ENCODE measurements at regions of chr7 and their contacts with region 1.

Region 1: GRCh38 chr7:128343554-128344430 is at the start of gene RBM28:
- DNase-seq: peak; percentile 88
- H3K4me3 Mint-ChIP-seq: peak within 1 kb of the TSS; percentile 93
- H3K27ac Mint-ChIP-seq: peak within 1 kb of the TSS; percentile 88
- H3K4me1 Mint-ChIP-seq: peaks cover 31% of the 10 kb centered on the region
- H3K27me3 Mint-ChIP-seq: peaks cover 15% of the 10 kb centered on the region
- total RNA-seq, gene RBM28: 30.7 to 34.8 TPM

Region 2: DNA sequence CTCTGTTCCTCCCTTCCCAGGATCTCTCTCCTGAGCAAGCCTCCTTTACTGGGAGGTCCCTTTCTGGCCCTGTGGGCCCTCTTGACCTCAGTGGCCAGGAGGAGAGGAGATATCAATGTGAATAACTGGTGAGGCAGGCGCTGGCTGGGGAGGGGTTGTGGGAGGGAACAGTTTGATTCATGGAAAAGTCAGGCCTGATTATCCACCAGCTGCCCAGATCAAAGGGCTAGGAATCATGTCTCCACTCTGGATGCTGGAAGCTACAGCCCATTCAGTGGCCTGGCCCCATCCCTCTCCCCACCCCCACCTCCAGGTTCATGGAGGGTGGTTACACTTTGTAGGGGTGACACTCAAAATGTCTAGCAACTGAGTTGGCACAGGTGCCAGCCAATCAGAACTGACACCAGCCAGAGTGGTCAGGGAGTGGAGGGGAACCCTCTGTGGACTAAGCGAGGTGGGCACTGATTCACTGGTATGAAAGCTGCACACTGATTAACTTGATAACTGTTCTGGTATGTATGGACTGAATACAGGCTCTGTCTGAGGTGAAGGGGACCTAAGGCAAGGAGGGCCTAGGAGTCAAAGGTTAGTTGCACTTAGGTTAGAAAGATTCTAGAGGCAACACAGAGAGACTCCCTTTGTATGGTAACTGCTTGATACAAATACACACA is 12.9 kb after region 1 on chr7:
- CTCF ChIA-PET with region 1: interaction called, 13 read pairs
- POLR2A ChIA-PET with region 1: interaction called, 8 read pairs
- DNase-seq: no peak
- H3K4me3 Mint-ChIP-seq: no peak overlapping the region
- H3K27ac Mint-ChIP-seq: no peak overlapping the region
- H3K4me1 Mint-ChIP-seq: peaks cover 15% of the 10 kb centered on the region
- H3K27me3 Mint-ChIP-seq: peaks cover 54% of the 10 kb centered on the region

Region 3: GRCh38 chr7:128381161-128381821 is 37.5 kb after region 1 on chr7:
- CTCF ChIA-PET with region 1: interaction called, 52 read pairs
- POLR2A ChIA-PET with region 1: interaction called, 6 read pairs
- DNase-seq: peak; percentile 44
- H3K4me3 Mint-ChIP-seq: no peak overlapping the region
- H3K27ac Mint-ChIP-seq: no peak overlapping the region
- H3K4me1 Mint-ChIP-seq: no peaks in the 10 kb centered on the region
- H3K27me3 Mint-ChIP-seq: peaks cover 1% of the 10 kb centered on the region